BJ (cell line): ENCODE measurements at regions of chr3 and their contacts with region 1.

Region 1: GRCh38 chr3:196837819-196838420 is 29.8 kb upstream of the SENP5 start:
- DNase-seq: no peak
- H3K4me3 ChIP-seq: no peak overlapping the region
- H3K27me3 ChIP-seq: no peaks in the 10 kb centered on the region
- CTCF ChIP-seq: peak; percentile 81

Region 2: DNA sequence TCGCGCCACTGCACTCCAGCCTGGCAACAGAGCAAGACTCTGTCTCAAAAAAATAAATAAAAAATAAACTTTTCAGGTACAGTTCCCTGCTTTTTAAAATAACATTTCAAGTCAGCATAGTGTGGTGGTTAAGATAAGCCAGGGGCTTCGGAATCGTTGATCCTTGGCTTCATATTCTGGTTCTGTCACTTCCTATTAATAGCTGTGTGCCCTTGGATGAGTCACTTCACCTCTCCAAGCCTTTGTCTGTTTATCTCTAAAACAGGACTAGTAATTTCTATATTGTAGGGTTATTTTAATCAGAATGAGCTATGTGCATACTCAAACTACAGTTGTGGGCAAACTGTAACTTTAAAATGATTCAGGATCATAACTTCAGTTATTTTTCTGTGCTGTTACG is 24.0 kb before region 1 on chr3:
- CTCF ChIA-PET with region 1: interaction called, 10 read pairs
- POLR2A ChIA-PET with region 1: no interaction called
- DNase-seq: no peak
- H3K4me3 ChIP-seq: no peak overlapping the region
- H3K27me3 ChIP-seq: no peaks in the 10 kb centered on the region
- CTCF ChIP-seq: no peak

Region 3: GRCh38 chr3:196849180-196849741 is 11.3 kb after region 1 on chr3:
- CTCF ChIA-PET with region 1: interaction called, 18 read pairs
- POLR2A ChIA-PET with region 1: no interaction called
- DNase-seq: peak; percentile 14
- H3K4me3 ChIP-seq: no peak overlapping the region
- H3K27me3 ChIP-seq: no peaks in the 10 kb centered on the region
- CTCF ChIP-seq: no peak

Region 4: GRCh38 chr3:196969660-196970546 is 132.0 kb after region 1 on chr3:
- CTCF ChIA-PET with region 1: interaction called, 16 read pairs
- POLR2A ChIA-PET with region 1: no interaction called
- DNase-seq: no peak
- H3K4me3 ChIP-seq: peak overlapping the region; percentile 68
- H3K27me3 ChIP-seq: no peaks in the 10 kb centered on the region; the same call in 1 of the 2 replicates
- CTCF ChIP-seq: no peak